Left ventricle myocardium superior (tissue), 1 donor: ENCODE measurements at regions of chr10 and their contacts with region 1.

Region 1: DNA sequence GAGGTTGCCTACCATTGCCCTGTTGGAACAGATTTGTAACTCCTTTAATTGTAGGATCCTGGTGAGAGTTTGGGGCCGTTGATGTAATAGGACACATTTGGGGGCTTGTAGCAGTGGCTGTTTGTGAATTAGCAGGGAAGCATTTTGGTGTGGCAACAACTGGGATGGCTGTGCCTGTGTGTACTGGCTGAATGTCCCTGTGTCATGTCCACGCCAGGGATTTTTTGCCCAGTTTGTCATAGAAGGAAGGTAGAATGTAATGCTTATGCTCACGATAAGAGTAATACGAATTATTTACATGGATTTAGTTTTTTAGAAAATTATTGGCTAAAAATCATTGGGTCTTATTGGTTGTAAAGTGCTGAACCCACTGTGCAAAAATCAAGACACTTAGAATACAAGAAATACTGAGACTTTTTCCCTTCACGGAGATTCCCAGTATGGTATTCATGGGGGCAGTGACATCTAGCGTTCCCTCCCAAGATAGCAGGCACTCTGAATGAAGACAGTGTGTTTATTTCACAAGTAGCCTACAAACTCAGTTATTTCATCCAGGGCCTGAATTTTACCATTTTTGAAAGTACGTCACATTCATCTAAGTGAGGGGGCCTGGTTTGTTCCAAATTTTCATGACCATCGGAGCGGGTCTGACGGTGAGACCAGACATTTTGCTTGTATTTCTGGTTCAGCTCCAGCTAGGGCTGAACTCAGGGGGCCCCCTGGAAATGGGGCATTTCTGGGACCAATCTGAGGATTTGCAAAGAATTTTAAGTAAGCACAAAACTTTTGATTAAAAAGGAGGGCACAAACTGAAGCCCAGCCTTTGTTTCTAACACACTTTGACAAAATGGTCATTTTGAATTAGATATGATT is 74.7 kb downstream of the CACNB2 start:
- DNase-seq: no peak
- ATAC-seq: peak; percentile 76

Region 2: GRCh38 chr10:17847585-17848296 is 367.2 kb before region 1 on chr10:
- intact Hi-C with region 1: loop called (anchors 2 kb)
- DNase-seq: no peak
- ATAC-seq: peak; percentile 31

Region 3: DNA sequence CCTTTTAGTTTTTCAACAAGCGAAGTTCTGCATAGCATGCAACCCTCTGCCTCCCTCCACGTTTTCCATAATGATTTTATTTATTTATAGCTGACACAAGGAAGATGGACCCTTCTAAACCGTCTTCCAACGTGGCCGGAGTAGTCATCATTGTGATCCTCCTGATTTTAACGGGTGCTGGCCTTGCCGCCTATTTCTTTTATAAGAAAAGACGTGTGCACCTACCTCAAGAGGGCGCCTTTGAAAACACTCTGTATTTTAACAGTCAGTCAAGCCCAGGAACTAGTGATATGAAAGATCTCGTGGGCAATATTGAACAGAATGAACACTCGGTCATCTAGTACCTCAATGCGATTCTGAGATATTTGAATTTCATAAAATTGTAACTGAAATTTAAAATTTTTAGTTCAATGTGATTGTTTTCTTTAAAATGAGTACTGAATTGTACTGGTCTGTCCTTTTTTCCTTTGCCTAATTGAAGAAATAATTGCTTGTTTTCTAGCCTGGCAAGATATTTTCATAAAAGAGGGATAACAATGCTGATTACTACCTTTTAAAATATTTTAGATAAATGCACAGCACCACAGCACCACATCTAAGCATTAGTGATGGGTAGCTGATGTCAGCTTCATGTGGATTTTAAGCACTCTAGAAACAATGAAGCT is 304.7 kb before region 1 on chr10:
- intact Hi-C with region 1: loop called (anchors 5 kb)
- DNase-seq: no peak
- ATAC-seq: no peak

Region 4: DNA sequence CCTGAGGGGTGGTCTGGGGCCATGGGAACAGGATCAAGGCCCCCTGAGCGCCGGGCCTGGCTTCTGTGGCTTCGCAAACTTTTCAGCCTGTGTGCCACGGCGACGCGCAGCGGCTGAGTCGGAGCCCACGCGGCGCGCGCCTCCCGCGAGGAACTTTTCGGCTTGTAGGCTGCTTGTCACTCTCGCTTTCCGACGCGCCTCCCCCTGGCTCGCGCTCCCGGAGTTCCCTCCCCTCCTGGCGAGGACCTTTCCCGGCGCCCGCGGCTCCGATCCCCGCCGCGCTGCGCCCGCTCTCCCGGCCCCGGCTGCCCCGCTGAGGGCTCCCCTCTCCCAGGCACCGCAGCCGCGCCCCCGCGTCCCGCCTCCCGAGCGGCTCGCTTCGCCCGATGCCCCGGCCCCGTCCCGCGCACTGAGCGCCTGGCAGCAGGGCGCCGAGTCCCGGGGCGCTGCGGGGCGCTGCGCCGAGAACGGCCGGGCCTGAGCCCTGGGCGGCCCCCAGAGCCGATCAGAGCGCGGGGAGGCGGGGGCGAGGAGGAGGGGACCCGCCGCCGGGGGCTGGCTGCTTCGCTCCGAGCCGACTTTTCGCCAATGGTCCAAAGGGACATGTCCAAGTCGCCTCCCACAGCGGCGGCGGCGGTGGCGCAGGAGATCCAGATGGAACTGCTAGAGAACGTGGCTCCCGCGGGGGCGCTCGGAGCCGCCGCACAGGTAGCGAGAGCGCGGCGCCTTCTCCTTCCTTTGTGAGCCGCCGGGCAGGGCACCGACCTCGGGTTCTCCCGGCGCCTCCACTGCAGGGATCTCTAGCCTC is 74.6 kb before region 1 on chr10 and contains the start of gene CACNB2:
- intact Hi-C with region 1: loop called (anchors 5 kb)
- DNase-seq: peak; percentile 86
- ATAC-seq: peak; percentile 72
- total RNA-seq, gene CACNB2: 55.9 TPM